ENCODE measurements at regions of chr3 and their contacts with region 1.

Region 1: GRCh38 chr3:108589146-108589997 is at the starts of genes CIP2A and DZIP3:
- DNase-seq: peak; percentile 86
- H3K4me3 Mint-ChIP-seq: peak within 1 kb of the TSS; percentile 98
- H3K27ac Mint-ChIP-seq: peak within 1 kb of the TSS; percentile 96
- H3K4me1 Mint-ChIP-seq: peaks cover 52% of the 10 kb centered on the region
- H3K27me3 Mint-ChIP-seq: no peaks in the 10 kb centered on the region
- total RNA-seq, gene CIP2A: 46.8 to 47.6 TPM
- total RNA-seq, gene DZIP3: 16.1 to 17.2 TPM

Region 2: GRCh38 chr3:108221911-108222852 is 367.2 kb before region 1 on chr3 and contains the start of gene IFT57:
- CTCF ChIA-PET with region 1: no interaction called
- POLR2A ChIA-PET with region 1: interaction called, 16 read pairs
- DNase-seq: peak; percentile 96
- H3K4me3 Mint-ChIP-seq: peak within 1 kb of the TSS; percentile 97
- H3K27ac Mint-ChIP-seq: peak within 1 kb of the TSS; percentile 97
- H3K4me1 Mint-ChIP-seq: peaks cover 46% of the 10 kb centered on the region
- H3K27me3 Mint-ChIP-seq: no peaks in the 10 kb centered on the region
- total RNA-seq, gene IFT57: 21.0 to 28.0 TPM

Region 3: GRCh38 chr3:108602249-108602934 is 13.0 kb after region 1 on chr3:
- CTCF ChIA-PET with region 1: interaction called, 17 read pairs
- POLR2A ChIA-PET with region 1: interaction called, 205 read pairs
- DNase-seq: peak; percentile 43
- H3K4me3 Mint-ChIP-seq: peak overlapping the region; percentile 45
- H3K27ac Mint-ChIP-seq: peak overlapping the region; percentile 53
- H3K4me1 Mint-ChIP-seq: peaks cover 58% of the 10 kb centered on the region
- H3K27me3 Mint-ChIP-seq: no peaks in the 10 kb centered on the region

Region 4: DNA sequence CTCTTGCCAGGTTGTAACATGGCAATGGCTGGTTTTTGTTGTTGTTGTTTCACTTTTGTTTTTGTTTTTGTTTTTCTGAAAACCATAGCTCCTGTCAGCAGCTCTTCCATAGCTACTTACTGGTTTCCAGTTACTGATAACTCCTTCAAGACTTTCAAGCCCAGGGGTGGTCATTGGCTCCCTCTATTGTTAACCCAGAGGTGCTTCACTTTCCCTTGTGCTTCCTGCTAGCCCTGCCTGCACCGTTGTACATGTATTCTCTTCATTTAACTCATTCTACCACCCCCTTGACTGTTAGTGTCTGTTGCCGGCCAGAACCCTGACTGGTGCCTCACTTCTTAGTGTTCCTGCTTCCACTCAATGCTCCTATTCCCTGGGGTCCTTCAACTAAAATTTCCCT is 229.0 kb after region 1 on chr3:
- CTCF ChIA-PET with region 1: interaction called, 8 read pairs
- POLR2A ChIA-PET with region 1: interaction called, 92 read pairs
- DNase-seq: peak; percentile 78
- H3K4me3 Mint-ChIP-seq: peak overlapping the region; percentile 1
- H3K27ac Mint-ChIP-seq: peak overlapping the region; percentile 22
- H3K4me1 Mint-ChIP-seq: peaks cover 31% of the 10 kb centered on the region
- H3K27me3 Mint-ChIP-seq: no peaks in the 10 kb centered on the region

Region 5: GRCh38 chr3:108835101-108835500 is 245.7 kb after region 1 on chr3:
- CTCF ChIA-PET with region 1: interaction called, 5 read pairs
- POLR2A ChIA-PET with region 1: interaction called, 43 read pairs
- DNase-seq: peak; percentile 40
- H3K4me3 Mint-ChIP-seq: peak overlapping the region; percentile 77
- H3K27ac Mint-ChIP-seq: peak overlapping the region; percentile 95
- H3K4me1 Mint-ChIP-seq: peaks cover 81% of the 10 kb centered on the region
- H3K27me3 Mint-ChIP-seq: no peaks in the 10 kb centered on the region